ENCODE measurements at regions of chr14 and their contacts with region 1.

Region 1: GRCh38 chr14:54347997-54348611 is 48.7 kb upstream of the CDKN3 start:
- DNase-seq: no peak
- H3K4me3 ChIP-seq: no peak overlapping the region
- H3K27ac ChIP-seq: no peak overlapping the region
- H3K4me1 ChIP-seq: peaks cover 0 to 5% (median under 1%) of the 10 kb centered on the region in 6 donors
- H3K27me3 ChIP-seq: no peaks in the 10 kb centered on the region
- CTCF ChIP-seq: peak; percentile 17 to 67 (median 58)
- POLR2A ChIP-seq: no peak

Region 2: GRCh38 chr14:53539489-53540126 is 808.5 kb before region 1 on chr14:
- intact Hi-C with region 1: loop called (anchors 10 kb)
- DNase-seq: peak; percentile 74
- H3K4me3 ChIP-seq: no peak overlapping the region
- H3K27ac ChIP-seq: no peak overlapping the region
- H3K4me1 ChIP-seq: peaks cover 0 to 8% (median 0%) of the 10 kb centered on the region in 6 donors
- H3K27me3 ChIP-seq: peaks cover 0 to 3% (median 0%) of the 10 kb centered on the region in 7 donors
- CTCF ChIP-seq: peak; percentile 34 to 84 (median 71)
- POLR2A ChIP-seq: no peak

Measured in spleen (tissue), 13 donors.